Heart right ventricle (tissue), 16 donors: ENCODE measurements at regions of chr1 and their contacts with region 1.

Region 1: GRCh38 chr1:62337706-62338631 is 18.7 kb upstream of the KANK4 start:
- DNase-seq: peak in 1 of 2 donors; percentile 18
- ATAC-seq: peak; percentile 20 to 61 (median 53)
- H3K4me3 ChIP-seq: no peak overlapping the region
- H3K27ac ChIP-seq: peak overlapping the region in 9 of 10 donors; percentile 26 to 79 (median 69)
- H3K4me1 ChIP-seq: peaks cover 5 to 34% (median 23%) of the 10 kb centered on the region in 9 donors
- H3K27me3 ChIP-seq: no peaks in the 10 kb centered on the region
- CTCF ChIP-seq: peak in 4 of 9 donors; percentile 11 to 25 (median 18)

Region 2: DNA sequence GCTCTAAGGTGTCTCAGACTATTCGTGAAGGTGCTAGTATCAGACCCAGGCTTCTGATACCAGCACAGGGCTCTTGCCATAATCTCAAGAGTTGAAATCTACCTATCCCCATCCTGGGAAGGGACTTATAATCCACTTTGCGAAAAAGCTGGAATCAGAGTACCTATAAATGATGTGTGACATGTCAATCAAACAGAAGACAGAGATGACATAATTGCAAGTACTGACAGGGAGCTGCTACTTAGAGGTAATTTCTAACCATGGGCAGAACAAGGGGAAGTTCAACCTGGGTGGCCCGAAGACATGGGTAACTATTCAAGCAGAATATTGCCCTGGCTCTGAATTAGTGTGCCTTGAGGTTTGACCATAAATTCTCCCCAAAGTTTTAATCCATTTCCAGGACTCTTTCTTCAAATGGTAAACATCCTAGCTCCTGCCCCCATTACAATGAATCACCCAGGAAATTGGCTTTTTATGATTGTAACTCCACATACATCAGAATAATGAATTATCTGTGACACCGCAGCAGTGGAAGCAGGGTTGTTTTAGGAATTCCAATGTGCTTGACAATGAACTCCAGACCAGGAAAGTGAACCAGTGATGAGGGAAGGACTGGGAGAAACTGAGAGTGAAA is 55.9 kb before region 1 on chr1:
- intact Hi-C with region 1: loop called in 1 of 10 experiments (anchors 5 kb)
- DNase-seq: no peak
- ATAC-seq: no peak
- H3K4me3 ChIP-seq: no peak overlapping the region
- H3K27ac ChIP-seq: no peak overlapping the region
- H3K4me1 ChIP-seq: peaks cover 0 to 20% (median 7%) of the 10 kb centered on the region in 9 donors
- H3K27me3 ChIP-seq: peaks cover 0 to 28% (median 15%) of the 10 kb centered on the region in 7 donors
- CTCF ChIP-seq: no peak